ENCODE measurements at regions of chr12 and their contacts with region 1.

Region 1: GRCh38 chr12:27014085-27014858 is at the start of gene TM7SF3:
- DNase-seq: peak; percentile 97 to 98 (median 97)
- H3K4me3 ChIP-seq: peak within 1 kb of the TSS; percentile 71 to 82
- H3K4me3 Mint-ChIP-seq: peak within 1 kb of the TSS; percentile 93 to 97 (median 94)
- H3K27ac ChIP-seq: peak within 1 kb of the TSS; percentile 92
- H3K27ac Mint-ChIP-seq: peak within 1 kb of the TSS; percentile 92 to 98 (median 96)
- H3K4me1 ChIP-seq: peaks cover 51% of the 10 kb centered on the region
- H3K4me1 Mint-ChIP-seq: peaks cover 31 to 59% (median 43%) of the 10 kb centered on the region in 4 donors
- H3K27me3 ChIP-seq: no peaks in the 10 kb centered on the region
- H3K27me3 Mint-ChIP-seq: no peaks in the 10 kb centered on the region
- total RNA-seq, gene TM7SF3: 27.7 to 29.2 TPM

Region 2: GRCh38 chr12:26097046-26097878 is 917.0 kb before region 1 on chr12:
- CTCF ChIA-PET with region 1: no interaction called
- POLR2A ChIA-PET with region 1: no interaction called
- intact Hi-C with region 1: loop called (anchors 2 kb)
- DNase-seq: peak; percentile 48 to 54 (median 49)
- H3K4me3 ChIP-seq: no peak overlapping the region
- H3K4me3 Mint-ChIP-seq: no peak overlapping the region
- H3K27ac ChIP-seq: no peak overlapping the region
- H3K27ac Mint-ChIP-seq: no peak overlapping the region
- H3K4me1 ChIP-seq: no peaks in the 10 kb centered on the region
- H3K4me1 Mint-ChIP-seq: peaks cover 0 to 1% (median 0%) of the 10 kb centered on the region in 4 donors
- H3K27me3 ChIP-seq: no peaks in the 10 kb centered on the region
- H3K27me3 Mint-ChIP-seq: peaks cover 7 to 9% of the 10 kb centered on the region in 2 donors

Region 3: DNA sequence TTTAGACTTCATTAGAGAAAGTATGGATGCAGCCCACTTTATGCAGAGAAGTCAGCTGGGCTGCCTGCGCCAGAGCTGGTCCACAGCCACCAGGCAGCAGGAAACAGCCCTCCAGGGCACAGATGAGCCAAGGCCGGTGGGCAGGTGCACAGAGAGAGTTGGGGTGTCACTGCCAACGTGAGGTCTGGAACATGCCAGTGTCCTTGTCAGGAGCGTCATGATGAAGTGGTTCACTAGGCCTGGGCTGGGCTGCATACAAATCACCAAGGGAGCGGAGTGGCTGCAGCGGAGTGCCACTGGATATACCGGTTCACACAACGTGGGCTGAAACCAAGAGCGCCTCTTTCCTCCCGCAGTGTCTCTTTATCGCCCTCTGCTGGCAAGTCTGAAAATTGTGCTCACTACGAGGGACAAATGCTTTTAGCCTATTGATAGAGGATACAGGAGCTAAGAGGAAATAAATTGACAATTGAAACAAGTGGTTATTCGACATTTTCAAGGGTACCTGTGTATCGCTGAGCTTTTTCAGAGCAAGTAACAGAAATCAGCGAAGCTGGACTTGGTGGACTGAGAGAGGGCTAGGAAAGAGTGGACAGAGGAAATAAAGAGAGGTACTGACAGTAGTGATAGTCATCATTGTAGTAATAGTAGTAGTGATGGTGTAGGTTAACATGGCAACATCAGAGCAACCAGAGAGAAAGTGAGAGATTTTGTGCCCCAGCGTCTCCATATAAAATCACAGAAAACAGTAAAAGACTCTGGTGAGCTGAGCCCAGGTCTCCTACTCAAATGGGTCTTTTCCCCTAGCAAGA is 129.3 kb before region 1 on chr12:
- CTCF ChIA-PET with region 1: interaction called, 17 read pairs
- POLR2A ChIA-PET with region 1: interaction called, 3 read pairs
- intact Hi-C with region 1: loop called (anchors 1 kb)
- DNase-seq: peak; percentile 77 to 82 (median 82)
- H3K4me3 ChIP-seq: no peak overlapping the region
- H3K4me3 Mint-ChIP-seq: peak overlapping the region; percentile 40 to 80 (median 67)
- H3K27ac ChIP-seq: no peak overlapping the region
- H3K27ac Mint-ChIP-seq: peak overlapping the region in 3 of 7 donors; percentile 42 to 60 (median 53)
- H3K4me1 ChIP-seq: peaks cover 4% of the 10 kb centered on the region
- H3K4me1 Mint-ChIP-seq: peaks cover 5 to 8% (median 7%) of the 10 kb centered on the region in 4 donors
- H3K27me3 ChIP-seq: no peaks in the 10 kb centered on the region
- H3K27me3 Mint-ChIP-seq: peaks cover 2 to 3% of the 10 kb centered on the region in 2 donors

Region 4: DNA sequence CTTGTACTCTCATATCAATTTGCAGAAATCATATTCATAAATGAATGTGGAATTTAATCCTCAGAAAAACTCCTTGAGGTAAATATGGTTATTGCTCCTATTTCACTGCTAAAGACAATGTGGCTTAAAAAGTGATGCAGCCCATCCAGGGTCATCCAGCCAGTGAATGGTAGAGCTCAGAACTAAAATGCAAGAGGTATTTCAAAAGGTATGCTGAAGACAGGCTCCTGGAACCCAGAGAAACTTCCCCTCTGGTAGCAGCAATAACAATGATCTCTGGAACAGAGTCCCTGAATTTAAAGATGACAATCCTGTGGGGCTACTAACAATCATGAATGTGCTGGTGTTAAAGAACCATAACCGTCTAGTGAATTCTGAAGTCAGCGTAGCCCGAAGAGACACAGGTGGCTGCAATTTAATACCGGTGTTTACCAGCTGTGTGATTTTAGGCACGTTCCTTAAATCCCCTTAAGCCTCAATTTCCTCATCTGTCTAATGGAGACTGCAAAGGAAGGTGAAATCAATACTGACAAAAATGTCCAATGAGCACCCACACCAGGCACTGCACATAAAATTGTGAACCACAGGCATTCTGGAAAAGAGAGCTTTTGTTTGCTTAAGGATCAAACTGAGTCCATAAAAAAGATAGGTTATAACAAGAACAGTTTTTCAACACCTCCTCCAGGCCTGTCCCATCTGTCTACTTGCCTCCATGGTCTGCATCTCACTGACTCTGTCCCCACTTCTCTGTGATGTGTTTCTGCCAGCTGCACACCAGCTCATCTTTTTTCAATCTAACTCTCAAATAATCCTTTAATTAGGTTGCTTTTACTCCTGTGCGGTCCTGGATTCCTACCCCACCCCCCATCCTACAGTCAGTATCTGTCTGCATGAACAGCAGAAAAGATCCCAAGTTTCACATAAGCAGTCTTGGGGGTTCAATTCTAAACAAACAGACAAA is 10.6 kb before region 1 on chr12:
- CTCF ChIA-PET with region 1: interaction called, 11 read pairs
- POLR2A ChIA-PET with region 1: interaction called, 8 read pairs
- intact Hi-C with region 1: no loop called
- DNase-seq: no peak
- H3K4me3 ChIP-seq: no peak overlapping the region
- H3K4me3 Mint-ChIP-seq: no peak overlapping the region
- H3K27ac ChIP-seq: no peak overlapping the region
- H3K27ac Mint-ChIP-seq: peak overlapping the region in 1 of 7 donors; percentile 63
- H3K4me1 ChIP-seq: peaks cover 10% of the 10 kb centered on the region
- H3K4me1 Mint-ChIP-seq: peaks cover 16 to 31% (median 26%) of the 10 kb centered on the region in 4 donors
- H3K27me3 ChIP-seq: no peaks in the 10 kb centered on the region
- H3K27me3 Mint-ChIP-seq: no peaks in the 10 kb centered on the region

Region 5: DNA sequence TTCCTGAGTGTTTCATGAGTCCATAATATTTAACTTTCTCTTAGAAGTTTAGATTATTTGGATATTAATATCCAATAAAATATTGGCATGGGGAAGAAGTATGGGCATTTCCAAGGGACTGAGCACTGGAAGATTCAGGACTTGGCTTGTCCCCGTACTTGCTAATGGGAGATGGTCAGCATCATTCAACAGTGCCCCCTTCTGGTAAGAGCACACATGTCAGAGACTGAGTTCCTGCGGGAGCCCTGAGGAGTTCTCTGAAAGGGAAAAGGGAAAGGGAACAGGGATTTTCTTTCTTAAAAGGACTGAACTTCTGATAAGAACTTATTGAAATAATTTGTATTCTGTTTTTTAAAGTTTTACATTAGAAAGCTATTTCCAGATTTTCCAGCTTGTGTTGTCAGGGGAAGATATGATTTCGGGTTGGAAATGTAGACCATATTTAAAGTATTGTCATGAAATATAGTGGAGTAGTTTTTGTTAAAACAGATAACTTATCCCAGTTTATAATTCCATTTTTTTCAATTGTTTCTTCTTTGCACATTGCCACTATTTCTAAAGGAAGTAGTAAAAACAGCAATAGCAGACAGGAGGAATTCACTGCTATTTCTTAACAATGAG is 127.9 kb after region 1 on chr12:
- CTCF ChIA-PET with region 1: interaction called, 13 read pairs
- POLR2A ChIA-PET with region 1: no interaction called
- intact Hi-C with region 1: loop called (anchors 1 kb)
- DNase-seq: peak in 4 of 5 donors; percentile 31 to 46 (median 36)
- H3K4me3 ChIP-seq: no peak overlapping the region
- H3K4me3 Mint-ChIP-seq: peak overlapping the region in 3 of 8 donors; percentile 33 to 46 (median 35)
- H3K27ac ChIP-seq: no peak overlapping the region
- H3K27ac Mint-ChIP-seq: no peak overlapping the region
- H3K4me1 ChIP-seq: peaks cover 9% of the 10 kb centered on the region
- H3K4me1 Mint-ChIP-seq: peaks cover 4 to 14% (median 9%) of the 10 kb centered on the region in 4 donors
- H3K27me3 ChIP-seq: no peaks in the 10 kb centered on the region
- H3K27me3 Mint-ChIP-seq: no peaks in the 10 kb centered on the region

Region 6: GRCh38 chr12:27252934-27253333 is 238.7 kb after region 1 on chr12:
- CTCF ChIA-PET with region 1: no interaction called
- POLR2A ChIA-PET with region 1: no interaction called
- intact Hi-C with region 1: no loop called
- DNase-seq: no peak
- H3K4me3 ChIP-seq: no peak overlapping the region
- H3K4me3 Mint-ChIP-seq: no peak overlapping the region
- H3K27ac ChIP-seq: no peak overlapping the region
- H3K27ac Mint-ChIP-seq: peak overlapping the region in 1 of 7 donors; percentile 44
- H3K4me1 ChIP-seq: no peaks in the 10 kb centered on the region
- H3K4me1 Mint-ChIP-seq: peaks cover 22 to 39% (median 30%) of the 10 kb centered on the region in 4 donors
- H3K27me3 ChIP-seq: no peaks in the 10 kb centered on the region
- H3K27me3 Mint-ChIP-seq: no peaks in the 10 kb centered on the region

Region 7: DNA sequence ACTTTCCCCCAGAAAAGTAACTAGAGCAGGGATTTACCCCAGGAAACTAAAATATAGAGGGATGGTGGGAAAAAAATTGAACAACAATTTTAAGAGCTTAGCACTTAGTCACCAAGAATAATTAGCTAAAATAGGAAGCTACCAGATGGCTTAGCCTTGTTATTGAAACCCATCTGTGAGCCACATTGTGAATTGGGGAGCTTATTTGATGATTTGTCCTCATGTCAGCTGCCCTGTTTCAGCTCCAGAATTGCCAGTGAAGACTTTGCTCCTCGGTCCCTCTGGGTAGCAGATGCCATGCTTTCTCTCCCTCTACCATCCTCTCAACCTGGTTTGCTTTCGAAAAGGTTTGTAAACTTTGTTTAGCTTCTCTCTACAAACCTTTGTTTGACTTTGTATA is 1026.0 kb after region 1 on chr12:
- CTCF ChIA-PET with region 1: no interaction called
- POLR2A ChIA-PET with region 1: no interaction called
- intact Hi-C with region 1: no loop called
- DNase-seq: no peak
- H3K4me3 ChIP-seq: no peak overlapping the region
- H3K4me3 Mint-ChIP-seq: no peak overlapping the region
- H3K27ac ChIP-seq: no peak overlapping the region
- H3K27ac Mint-ChIP-seq: no peak overlapping the region
- H3K4me1 ChIP-seq: no peaks in the 10 kb centered on the region
- H3K4me1 Mint-ChIP-seq: no peaks in the 10 kb centered on the region
- H3K27me3 ChIP-seq: no peaks in the 10 kb centered on the region
- H3K27me3 Mint-ChIP-seq: peaks cover 0 to 2% of the 10 kb centered on the region in 2 donors

Region 8: DNA sequence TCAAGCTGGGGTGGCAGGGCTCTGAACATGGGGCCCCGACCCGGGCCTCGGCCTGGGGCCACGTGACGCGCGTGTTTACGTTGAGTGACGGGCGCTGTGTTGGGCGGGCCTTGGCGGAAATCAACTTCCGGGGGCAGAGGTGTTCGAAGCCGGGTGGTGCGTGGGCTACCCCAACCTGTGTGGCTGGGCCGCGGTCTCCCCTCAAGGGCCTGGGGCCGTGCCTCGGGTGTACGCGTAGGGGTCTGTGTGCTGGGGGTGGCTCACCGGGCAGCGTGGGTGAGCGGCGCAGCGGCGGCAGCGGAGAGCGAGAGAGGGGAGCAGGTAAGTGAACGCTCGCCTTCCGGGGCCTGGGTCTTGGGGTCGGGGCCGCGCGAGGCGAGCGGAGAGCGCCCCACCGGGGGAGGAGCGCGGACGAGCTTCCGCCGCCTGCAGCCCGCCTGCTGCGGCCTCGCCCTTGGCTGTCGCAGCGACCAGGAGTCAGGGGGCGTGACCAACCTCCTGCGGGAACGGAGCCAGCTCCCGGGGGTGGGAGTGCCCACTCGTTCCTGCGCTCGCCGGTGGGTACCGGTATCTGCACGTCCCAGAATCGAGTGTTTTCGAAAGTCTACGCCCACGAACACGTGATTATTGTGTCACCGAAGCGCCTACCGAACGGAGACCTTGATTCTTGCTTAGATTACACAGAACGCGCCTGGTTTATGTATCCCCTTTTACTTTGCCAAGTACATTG is 1176.2 kb after region 1 on chr12 and contains the start of gene CCDC91:
- CTCF ChIA-PET with region 1: no interaction called
- POLR2A ChIA-PET with region 1: no interaction called
- intact Hi-C with region 1: loop called (anchors 2 kb)
- DNase-seq: peak; percentile 90 to 96 (median 93)
- H3K4me3 ChIP-seq: peak within 1 kb of the TSS; percentile 78 to 94
- H3K4me3 Mint-ChIP-seq: peak within 1 kb of the TSS; percentile 90 to 99 (median 96)
- H3K27ac ChIP-seq: peak within 1 kb of the TSS; percentile 95
- H3K27ac Mint-ChIP-seq: peak within 1 kb of the TSS; percentile 98 to 100 (median 100)
- H3K4me1 ChIP-seq: peaks cover 34% of the 10 kb centered on the region
- H3K4me1 Mint-ChIP-seq: peaks cover 38 to 69% (median 53%) of the 10 kb centered on the region in 4 donors
- H3K27me3 ChIP-seq: no peaks in the 10 kb centered on the region
- H3K27me3 Mint-ChIP-seq: no peaks in the 10 kb centered on the region
- total RNA-seq, gene CCDC91: 83.9 to 88.4 TPM

Measured in CD4-positive, alpha-beta memory T cell (primary cell).